Left colon (tissue), 2 donors: ENCODE measurements at regions of chr12 and their contacts with region 1.

Region 1: DNA sequence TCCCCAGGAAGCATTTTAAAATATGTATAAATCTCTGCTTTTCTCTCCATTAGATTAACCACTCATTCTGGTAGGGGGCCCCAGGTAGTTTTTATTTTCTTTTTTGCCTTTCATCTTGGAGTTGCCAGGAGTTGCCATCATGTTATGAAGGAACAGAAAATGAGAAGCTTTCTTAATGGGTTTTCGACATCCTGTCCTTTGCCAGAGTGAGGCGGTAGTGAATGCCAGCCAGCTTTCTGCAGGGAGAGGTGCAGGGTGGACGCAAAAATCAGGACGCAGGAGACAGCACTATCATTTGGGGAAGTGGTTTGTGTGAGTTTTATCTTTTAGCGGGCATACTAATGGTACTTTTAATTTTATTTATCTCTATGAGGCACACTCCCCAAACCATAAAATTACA is 1.7 kb downstream of the RASSF8 start:
- DNase-seq: no peak
- ATAC-seq: no peak

Region 2: DNA sequence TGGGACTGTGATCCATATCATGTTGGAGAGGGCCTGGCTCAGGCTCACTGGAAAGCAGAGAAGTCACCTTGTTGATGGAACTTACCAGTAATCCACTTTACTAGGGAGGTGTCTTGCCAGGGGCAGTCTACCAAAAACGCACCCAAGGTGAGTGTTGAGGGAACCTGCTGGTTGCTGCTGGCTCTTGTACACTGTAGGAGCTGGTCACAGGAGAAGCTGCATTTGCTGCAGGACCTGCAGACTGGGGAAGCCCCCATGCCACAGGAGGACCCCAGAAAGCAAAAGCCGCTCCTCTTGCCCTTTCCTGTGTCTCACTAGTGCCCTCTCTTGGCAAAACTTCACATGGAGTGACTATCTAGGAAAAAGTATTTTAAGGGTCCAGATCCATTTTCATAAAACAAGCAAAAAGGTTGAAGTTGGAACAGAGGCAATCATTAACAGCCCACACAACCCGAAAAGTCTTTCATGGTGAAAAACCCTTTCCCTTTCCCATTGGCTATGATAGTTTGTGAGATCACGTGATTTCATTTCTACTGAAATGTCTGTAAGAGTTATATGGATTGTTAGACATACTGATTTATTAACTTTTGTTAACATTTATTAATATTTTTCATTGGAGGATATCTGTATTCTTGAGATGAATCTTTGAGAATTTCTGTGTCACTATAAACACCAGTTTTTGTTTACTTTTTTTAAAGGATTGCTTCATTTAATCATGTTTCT is 57.5 kb after region 1 on chr12:
- intact Hi-C with region 1: loop called in 1 of 2 experiments (anchors 10 kb)
- DNase-seq: peak in 1 of 2 donors; percentile 9
- ATAC-seq: no peak

Region 3: DNA sequence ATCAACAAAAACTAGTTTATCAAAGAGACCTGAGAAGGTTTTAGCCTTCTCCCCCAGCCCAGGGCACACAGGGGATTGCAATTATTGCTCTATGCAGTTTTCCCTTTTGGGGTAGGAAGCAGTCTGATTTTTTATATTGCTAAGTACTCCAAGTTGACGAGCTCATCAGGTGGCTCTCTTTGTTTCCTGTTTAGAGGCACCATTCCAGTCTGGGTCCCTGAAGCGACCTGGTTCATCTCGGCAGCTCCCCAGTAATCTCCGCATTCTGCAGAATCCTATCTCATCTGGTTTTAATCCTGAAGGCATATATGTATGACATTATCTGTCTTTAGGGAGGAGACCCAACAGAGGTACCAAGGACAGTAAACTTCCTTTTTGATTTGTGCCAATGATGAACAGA is 108.4 kb after region 1 on chr12:
- intact Hi-C with region 1: no loop called
- DNase-seq: no peak
- ATAC-seq: no peak

Region 4: GRCh38 chr12:26318661-26319068 is 358.5 kb after region 1 on chr12:
- intact Hi-C with region 1: no loop called
- DNase-seq: peak; percentile 21 to 43
- ATAC-seq: no peak

Region 5: DNA sequence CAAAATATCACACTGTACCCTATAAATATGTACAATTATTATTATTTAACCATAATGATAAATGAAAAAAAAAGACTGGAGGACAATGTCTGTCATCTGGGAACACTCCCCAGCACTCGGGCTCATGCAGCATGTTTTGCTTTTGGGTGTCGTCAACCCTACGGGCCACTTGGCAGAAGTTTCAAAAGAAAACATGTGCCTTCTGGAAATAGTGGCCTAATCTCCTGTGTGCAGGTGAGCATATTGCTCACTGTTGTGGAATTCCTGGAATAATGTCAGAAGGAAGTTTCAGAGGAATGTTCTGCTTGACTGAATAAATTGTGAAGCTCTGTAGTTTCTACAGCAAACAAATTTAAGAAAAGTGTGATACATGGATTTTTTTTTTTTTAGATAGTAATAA is 533.5 kb after region 1 on chr12:
- intact Hi-C with region 1: no loop called
- DNase-seq: no peak
- ATAC-seq: no peak